Activated naive CD4-positive, alpha-beta T cell treated with anti-CD3 and anti-CD28 coated beads, Interleukin-2, amount 10 ng/mL, durations not matched to agents 7 days and 5 days (primary cell): ENCODE measurements at regions of chr16 and their contacts with region 1.

Region 1: GRCh38 chr16:30902029-30902972 is 5.9 kb downstream of the CTF1 start:
- DNase-seq: peak; percentile 73
- H3K4me3 Mint-ChIP-seq: peak overlapping the region; percentile 94
- H3K27ac Mint-ChIP-seq: peak overlapping the region; percentile 95
- H3K4me1 Mint-ChIP-seq: peaks cover 60% of the 10 kb centered on the region
- H3K27me3 Mint-ChIP-seq: no peaks in the 10 kb centered on the region

Region 2: DNA sequence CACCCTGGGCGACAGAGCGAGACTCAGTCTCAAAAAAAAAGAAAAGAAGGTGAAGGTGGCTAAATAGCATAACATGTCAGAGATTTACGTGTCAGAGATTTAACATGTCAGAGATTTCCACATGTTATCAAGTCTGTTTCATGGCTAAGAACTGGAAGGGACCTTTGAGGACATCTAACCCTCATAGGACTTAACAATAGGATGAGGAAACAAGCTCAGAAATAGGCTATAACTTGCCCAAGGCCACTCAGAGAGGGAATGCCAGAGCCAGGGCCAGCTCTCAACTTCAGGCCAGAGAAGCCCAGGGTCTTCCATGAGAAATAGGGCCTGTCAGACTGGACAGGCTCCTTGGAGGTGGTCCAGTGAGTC is 88.5 kb before region 1 on chr16:
- CTCF ChIA-PET with region 1: interaction called, 11 read pairs
- DNase-seq: no peak
- H3K4me3 Mint-ChIP-seq: peak overlapping the region; percentile 76
- H3K27ac Mint-ChIP-seq: peak overlapping the region; percentile 83
- H3K4me1 Mint-ChIP-seq: peaks cover 18% of the 10 kb centered on the region
- H3K27me3 Mint-ChIP-seq: peaks cover 23% of the 10 kb centered on the region

Region 3: DNA sequence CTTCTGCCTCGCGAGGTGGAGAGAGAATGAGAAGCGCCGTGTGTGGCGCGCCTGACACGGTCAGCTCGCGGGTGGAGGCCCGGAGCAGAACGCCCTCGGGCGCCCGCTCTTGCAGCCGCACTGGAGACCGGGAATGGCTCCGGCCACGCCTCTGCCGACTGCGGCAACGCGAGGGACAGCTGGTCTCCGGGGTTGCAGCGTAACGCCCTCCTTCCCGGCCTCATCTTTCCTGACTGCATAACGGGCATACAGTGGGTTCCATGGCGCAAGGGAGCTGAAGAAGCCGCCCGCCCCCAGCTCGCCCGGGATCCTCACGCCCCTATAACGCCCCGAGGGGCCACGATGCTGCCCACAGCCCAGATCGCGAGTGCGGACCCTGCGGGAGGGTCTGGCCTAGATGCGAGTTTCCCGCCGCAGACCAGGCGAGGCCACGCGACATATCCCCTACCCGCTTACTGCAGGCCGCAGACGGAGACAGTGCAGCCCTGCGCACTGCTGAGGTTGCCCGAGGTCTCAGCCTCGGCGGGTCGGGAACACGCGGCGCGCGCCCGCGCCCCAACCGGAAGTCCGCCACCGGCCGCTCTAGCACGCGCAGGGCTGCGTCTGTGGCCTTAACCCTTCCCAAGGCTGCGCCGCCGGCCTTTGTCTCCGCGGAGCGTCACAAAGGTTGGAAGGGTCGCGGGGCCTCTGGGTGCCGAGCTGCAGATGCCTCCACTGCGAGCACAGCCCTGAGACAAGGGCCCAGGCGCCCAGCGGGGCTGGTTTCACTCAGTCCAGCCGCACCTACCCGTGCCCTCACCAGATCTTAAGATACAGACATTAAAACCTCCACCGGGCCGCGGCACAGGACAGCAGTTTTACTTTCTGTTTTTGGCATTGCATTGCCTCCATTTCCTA is 27.2 kb before region 1 on chr16:
- CTCF ChIA-PET with region 1: interaction called, 28 read pairs
- DNase-seq: peak; percentile 90
- H3K4me3 Mint-ChIP-seq: peak overlapping the region; percentile 89
- H3K27ac Mint-ChIP-seq: peak overlapping the region; percentile 90
- H3K4me1 Mint-ChIP-seq: peaks cover 33% of the 10 kb centered on the region
- H3K27me3 Mint-ChIP-seq: no peaks in the 10 kb centered on the region

Region 4: DNA sequence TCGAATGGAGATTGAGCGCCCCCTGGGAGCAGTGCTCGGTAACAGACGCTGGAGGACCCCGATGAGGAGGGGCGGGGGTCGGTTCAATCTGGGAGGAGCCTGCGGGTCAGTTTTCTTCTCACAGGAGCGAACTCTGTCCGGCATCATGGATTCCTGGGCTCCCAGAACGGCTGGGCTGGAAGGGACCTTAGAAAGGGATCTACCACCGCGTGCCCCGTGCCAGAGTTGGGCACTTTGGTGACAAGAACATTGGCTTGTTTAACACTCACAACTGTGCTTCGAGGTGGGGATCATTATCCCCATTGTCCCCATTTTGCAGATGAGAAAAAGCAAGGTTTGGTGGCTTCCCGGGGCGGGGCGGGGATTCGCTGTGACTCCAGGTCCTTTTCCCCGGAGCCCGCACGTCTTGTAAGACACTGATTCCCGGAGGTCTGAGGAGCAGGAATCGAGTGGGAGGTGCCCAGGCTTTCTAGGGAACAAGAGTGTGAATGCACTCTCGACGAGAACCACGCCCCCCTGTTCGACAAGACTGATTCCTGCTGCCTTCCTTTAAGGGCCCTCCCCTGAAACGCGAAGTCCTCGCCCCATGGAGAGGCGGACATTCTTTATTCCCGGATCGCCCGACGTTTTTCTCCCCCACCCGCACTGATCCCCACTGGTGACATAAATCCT is 19.6 kb after region 1 on chr16:
- CTCF ChIA-PET with region 1: interaction called, 13 read pairs
- DNase-seq: peak; percentile 93
- H3K4me3 Mint-ChIP-seq: peak overlapping the region; percentile 100
- H3K27ac Mint-ChIP-seq: peak overlapping the region; percentile 100
- H3K4me1 Mint-ChIP-seq: peaks cover 32% of the 10 kb centered on the region
- H3K27me3 Mint-ChIP-seq: peaks cover 13% of the 10 kb centered on the region

Region 5: GRCh38 chr16:31260136-31260918 is 358.0 kb after region 1 on chr16:
- CTCF ChIA-PET with region 1: no interaction called
- DNase-seq: no peak
- H3K4me3 Mint-ChIP-seq: peak overlapping the region; percentile 85
- H3K27ac Mint-ChIP-seq: peak overlapping the region; percentile 81
- H3K4me1 Mint-ChIP-seq: peaks cover 55% of the 10 kb centered on the region
- H3K27me3 Mint-ChIP-seq: peaks cover 16% of the 10 kb centered on the region